Activated T-helper 1 cell treated with anti-CD3 and anti-CD28 coated beads, Interleukin-12 subunit alpha, Interleukin-12 subunit beta, Interleukin-2, Interleukin-4 antibody, amounts not matched to agents 30 ng/mL and 10 ng/mL and 1 ng/mL, durations not matched to agents 14 hours and 24 hours and 36 hours (primary cell): ENCODE measurements at regions of chr3 and their contacts with region 1.

Region 1: DNA sequence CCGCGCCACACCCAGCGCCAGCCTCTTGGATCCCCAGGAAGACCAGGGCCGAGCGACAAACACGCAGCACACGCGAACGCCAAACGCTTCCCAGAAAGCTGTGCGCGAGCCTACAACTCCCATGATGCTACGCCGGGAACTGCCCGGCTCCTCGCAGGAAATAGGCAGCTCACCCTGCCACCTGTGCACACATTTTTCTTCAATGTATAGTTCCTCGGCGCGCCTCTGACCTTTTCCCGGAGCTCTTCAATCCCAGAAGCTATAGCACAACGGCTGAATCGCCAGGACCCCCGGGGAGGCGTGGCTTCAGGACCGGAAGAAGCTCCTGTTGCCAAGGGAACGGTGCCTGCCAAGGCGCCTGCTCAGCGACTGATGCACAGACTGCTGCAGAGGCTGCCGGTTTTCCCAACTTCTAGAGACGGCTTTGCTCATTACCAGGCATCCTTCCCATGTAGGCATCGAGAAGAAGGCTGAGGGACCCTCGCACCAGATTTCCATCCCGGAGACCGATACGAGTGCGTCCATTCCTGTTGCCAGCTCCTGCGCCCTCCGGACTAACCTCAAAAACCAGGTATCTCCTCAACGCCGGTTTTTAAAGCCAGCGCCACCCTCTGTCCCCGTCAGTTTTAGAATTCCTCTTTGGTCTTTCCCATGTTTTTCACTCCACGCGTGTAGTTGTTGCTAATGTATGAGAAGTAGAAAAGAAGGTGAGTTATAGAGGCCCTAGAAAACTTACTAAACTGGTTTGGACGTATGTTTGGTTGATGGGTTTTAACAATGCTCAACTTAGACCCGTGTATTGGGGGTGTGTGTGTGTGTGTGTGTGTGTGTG is at the start of gene ARL6:
- DNase-seq: peak; percentile 66
- H3K4me3 Mint-ChIP-seq: peak within 1 kb of the TSS; percentile 96
- H3K27ac Mint-ChIP-seq: peak within 1 kb of the TSS; percentile 95
- H3K4me1 Mint-ChIP-seq: peaks cover 31% of the 10 kb centered on the region
- H3K27me3 Mint-ChIP-seq: peaks cover 3% of the 10 kb centered on the region
- total RNA-seq, gene ARL6: 5.9 and 6.2 TPM in 2 replicates

Region 2: DNA sequence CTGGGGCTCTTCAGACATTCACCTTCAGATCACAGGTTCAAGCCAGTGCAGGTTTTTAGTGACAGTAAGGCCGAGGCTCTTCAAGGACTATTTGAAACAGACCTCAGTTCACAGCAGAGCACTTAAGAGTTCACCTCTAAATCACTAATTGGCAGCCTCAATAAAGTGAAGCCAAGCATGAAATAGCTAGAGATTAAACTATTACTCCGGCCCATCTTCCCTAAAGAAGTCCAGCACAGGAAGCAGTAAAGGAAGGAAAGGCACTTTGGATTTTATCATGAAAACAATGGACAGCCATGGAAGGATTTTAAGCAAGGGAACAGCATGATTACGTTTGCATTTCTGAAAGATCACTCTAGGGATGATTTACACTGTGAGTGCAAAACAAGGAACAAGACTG is 27.7 kb before region 1 on chr3:
- intact Hi-C with region 1: no loop called
- DNase-seq: no peak
- H3K4me3 Mint-ChIP-seq: no peak overlapping the region
- H3K27ac Mint-ChIP-seq: no peak overlapping the region
- H3K4me1 Mint-ChIP-seq: no peaks in the 10 kb centered on the region
- H3K27me3 Mint-ChIP-seq: peaks cover 22% of the 10 kb centered on the region

Region 3: GRCh38 chr3:97821810-97822775 is 57.5 kb after region 1 on chr3 and contains the start of gene CRYBG3:
- intact Hi-C with region 1: loop called (anchors 1 kb)
- DNase-seq: peak; percentile 86
- H3K4me3 Mint-ChIP-seq: peak within 1 kb of the TSS; percentile 99
- H3K27ac Mint-ChIP-seq: peak within 1 kb of the TSS; percentile 92
- H3K4me1 Mint-ChIP-seq: peaks cover 40% of the 10 kb centered on the region
- H3K27me3 Mint-ChIP-seq: peaks cover 34% of the 10 kb centered on the region
- total RNA-seq, gene CRYBG3: 6.5 and 6.8 TPM in 2 replicates

Region 4: GRCh38 chr3:98645039-98645438 is 880.4 kb after region 1 on chr3:
- intact Hi-C with region 1: no loop called
- DNase-seq: no peak
- H3K4me3 Mint-ChIP-seq: no peak overlapping the region
- H3K27ac Mint-ChIP-seq: no peak overlapping the region
- H3K4me1 Mint-ChIP-seq: no peaks in the 10 kb centered on the region
- H3K27me3 Mint-ChIP-seq: peaks cover 17% of the 10 kb centered on the region

Region 5: DNA sequence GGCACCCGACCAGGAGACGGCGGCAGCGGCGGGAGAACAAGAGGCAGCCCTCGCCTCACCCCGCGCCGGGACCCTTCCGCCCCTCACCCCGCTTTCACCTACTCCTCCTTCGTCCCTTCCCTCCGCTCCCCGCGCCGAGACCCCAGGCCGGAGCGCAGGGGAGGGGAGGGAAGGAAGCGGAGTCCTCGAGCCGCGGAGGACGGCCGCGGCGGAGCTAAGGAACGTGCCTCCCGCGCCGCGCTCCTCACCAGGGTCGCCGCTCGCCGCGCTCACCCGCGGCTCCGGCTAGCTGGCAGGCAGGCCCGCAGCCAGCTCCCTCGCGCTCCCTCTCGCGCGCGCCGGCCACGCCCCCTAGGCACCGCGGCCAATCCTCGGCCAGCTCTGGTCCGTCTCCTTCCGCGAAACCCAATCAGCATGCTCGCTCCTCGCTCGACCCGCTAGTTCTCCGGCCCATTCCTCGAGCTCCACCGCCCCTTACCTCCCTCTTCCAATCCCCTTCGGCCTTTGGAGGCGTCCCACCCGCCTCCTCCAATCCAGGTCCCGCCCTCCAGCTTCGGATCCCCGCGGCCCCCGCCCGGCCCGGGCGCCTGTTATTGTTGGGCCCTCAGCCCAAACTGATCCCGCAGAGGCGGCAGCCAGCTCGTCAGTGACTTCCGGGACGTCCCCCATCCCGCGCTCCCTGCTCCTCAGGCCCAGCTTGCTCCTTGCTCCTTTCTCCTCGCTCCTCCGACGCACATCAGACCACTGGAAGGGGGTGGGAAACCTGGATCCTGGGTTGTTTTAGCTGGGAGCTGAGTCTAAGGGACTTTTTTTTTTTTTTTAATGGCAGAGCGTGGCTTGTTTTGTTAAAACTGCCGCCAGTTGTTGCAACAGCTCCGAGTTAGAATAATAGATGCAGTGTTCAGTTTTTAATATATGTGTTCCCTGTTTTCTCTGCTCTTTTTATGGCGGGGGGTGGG is 1137.0 kb after region 1 on chr3 and contains the start of gene DCBLD2:
- intact Hi-C with region 1: loop called (anchors 2 kb)
- DNase-seq: peak; percentile 94
- H3K4me3 Mint-ChIP-seq: peak within 1 kb of the TSS; percentile 84
- H3K27ac Mint-ChIP-seq: peak within 1 kb of the TSS; percentile 51
- H3K4me1 Mint-ChIP-seq: peaks cover 12% of the 10 kb centered on the region
- H3K27me3 Mint-ChIP-seq: peaks cover 33% of the 10 kb centered on the region
- total RNA-seq, gene DCBLD2: 1.5 and 2.3 TPM in 2 replicates